ENCODE measurements at regions of chr4 and their contacts with region 1.

Region 1: DNA sequence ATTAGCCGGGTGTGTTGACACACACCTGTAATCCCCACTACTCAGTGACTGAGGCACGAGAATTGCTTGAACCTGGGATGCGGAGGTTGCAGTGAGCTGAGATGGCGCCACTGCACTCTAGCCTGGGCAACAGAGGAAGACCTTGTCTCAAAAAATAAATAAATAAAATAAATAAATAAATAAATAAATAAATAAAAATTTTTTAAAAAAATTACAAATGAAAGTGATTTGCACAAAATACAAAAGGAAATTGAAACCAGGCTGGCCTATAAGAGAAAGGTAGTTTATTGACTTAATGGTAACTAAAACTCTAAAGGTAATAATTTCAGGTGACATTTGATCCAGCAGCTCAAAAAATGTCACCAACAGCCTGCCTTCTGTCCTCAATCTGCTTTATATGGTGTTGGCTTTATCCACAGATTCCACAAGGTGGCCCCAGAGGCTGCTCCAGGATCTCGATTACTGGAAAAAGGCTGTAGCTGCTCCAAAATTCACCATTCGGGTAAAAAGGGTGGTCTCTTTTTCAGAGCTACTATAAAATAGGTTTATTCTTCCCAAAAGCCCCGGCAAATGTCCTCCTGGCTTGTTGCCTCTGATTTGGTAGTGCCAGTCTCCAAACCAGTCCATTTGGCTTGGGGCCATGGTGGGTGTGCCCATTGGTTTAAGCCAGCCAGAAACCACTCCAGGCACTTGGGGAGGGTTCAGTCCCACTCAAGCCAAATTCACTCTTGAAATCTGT is 61.4 kb upstream of the TRIM2 start:
- DNase-seq: peak; percentile 64
- H3K4me3 ChIP-seq: no peak overlapping the region
- H3K27ac ChIP-seq: no peak overlapping the region
- H3K4me1 ChIP-seq: no peaks in the 10 kb centered on the region
- H3K27me3 ChIP-seq: no peaks in the 10 kb centered on the region
- CTCF ChIP-seq: peak; percentile 46 to 90 (median 83)
- POLR2A ChIP-seq: no peak

Region 2: GRCh38 chr4:153318696-153319320 is 175.9 kb after region 1 on chr4:
- intact Hi-C with region 1: loop called (anchors 2 kb)
- DNase-seq: peak; percentile 39
- H3K4me3 ChIP-seq: no peak overlapping the region
- H3K27ac ChIP-seq: no peak overlapping the region
- H3K4me1 ChIP-seq: no peaks in the 10 kb centered on the region
- H3K27me3 ChIP-seq: no peaks in the 10 kb centered on the region
- CTCF ChIP-seq: peak in 3 of 4 experiments; percentile 60 to 74 (median 71)
- POLR2A ChIP-seq: no peak

Region 3: GRCh38 chr4:153573881-153574802 is 431.3 kb after region 1 on chr4:
- intact Hi-C with region 1: loop called (anchors 10 kb)
- DNase-seq: peak; percentile 58
- H3K4me3 ChIP-seq: no peak overlapping the region
- H3K27ac ChIP-seq: no peak overlapping the region
- H3K4me1 ChIP-seq: no peaks in the 10 kb centered on the region
- H3K27me3 ChIP-seq: no peaks in the 10 kb centered on the region
- CTCF ChIP-seq: peak in 3 of 4 experiments; percentile 61 to 71 (median 69)
- POLR2A ChIP-seq: no peak

Region 4: GRCh38 chr4:153643406-153644383 is 500.8 kb after region 1 on chr4:
- intact Hi-C with region 1: loop called (anchors 5 kb)
- DNase-seq: no peak
- H3K4me3 ChIP-seq: no peak overlapping the region
- H3K27ac ChIP-seq: no peak overlapping the region
- H3K4me1 ChIP-seq: no peaks in the 10 kb centered on the region
- H3K27me3 ChIP-seq: no peaks in the 10 kb centered on the region
- CTCF ChIP-seq: peak in 3 of 4 experiments; percentile 33 to 67 (median 54)
- POLR2A ChIP-seq: no peak